ENCODE measurements at regions of chr7 and their contacts with region 1.

Region 1: GRCh38 chr7:131071786-131072504 is 255.7 kb upstream of the MKLN1 start:
- DNase-seq: no peak
- ATAC-seq: no peak
- H3K4me3 Mint-ChIP-seq: no peak overlapping the region
- H3K27ac Mint-ChIP-seq: peak overlapping the region; percentile 73
- H3K4me1 Mint-ChIP-seq: peaks cover 82% of the 10 kb centered on the region
- H3K27me3 Mint-ChIP-seq: no peaks in the 10 kb centered on the region
- CTCF ChIP-seq: no peak

Region 2: GRCh38 chr7:129703751-129704150 is 1368.2 kb before region 1 on chr7:
- CTCF ChIA-PET with region 1: no interaction called
- POLR2A ChIA-PET with region 1: interaction called, 12 read pairs
- intact Hi-C with region 1: no loop called
- DNase-seq: no peak
- ATAC-seq: no peak
- H3K4me3 Mint-ChIP-seq: no peak overlapping the region
- H3K27ac Mint-ChIP-seq: no peak overlapping the region
- H3K4me1 Mint-ChIP-seq: no peaks in the 10 kb centered on the region
- H3K27me3 Mint-ChIP-seq: no peaks in the 10 kb centered on the region
- CTCF ChIP-seq: no peak

Region 3: DNA sequence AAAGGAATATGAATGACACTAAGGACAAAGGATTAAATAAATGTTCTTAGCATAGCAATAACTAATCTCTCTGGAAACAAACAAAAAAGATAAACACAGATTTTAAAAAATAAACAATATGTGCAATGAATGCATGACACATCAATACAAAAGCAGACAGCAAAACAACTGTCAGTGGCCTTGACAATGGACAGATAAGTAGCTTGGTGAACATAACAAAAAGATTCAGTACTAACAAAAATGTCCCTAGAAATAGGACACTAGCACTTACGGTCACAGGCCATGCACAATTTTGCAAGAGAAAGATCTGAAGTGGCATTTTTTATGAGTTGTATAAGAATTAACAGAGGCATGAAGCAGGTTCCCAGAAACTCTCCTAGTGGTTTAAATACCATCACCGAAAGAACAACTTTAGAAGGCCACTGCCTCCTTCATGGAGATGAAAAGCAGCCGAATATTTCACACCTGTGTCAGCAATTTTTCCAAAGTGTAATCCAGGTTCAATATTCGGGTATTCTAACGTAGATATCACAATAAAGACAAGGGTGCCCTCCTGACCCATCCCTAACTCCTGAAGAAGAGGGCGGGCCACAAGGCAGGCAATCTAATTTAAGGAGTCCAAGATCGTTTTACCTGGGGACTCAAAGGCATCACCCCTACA is 24.5 kb after region 1 on chr7:
- CTCF ChIA-PET with region 1: no interaction called
- POLR2A ChIA-PET with region 1: no interaction called
- intact Hi-C with region 1: no loop called
- DNase-seq: no peak
- ATAC-seq: no peak
- H3K4me3 Mint-ChIP-seq: no peak overlapping the region
- H3K27ac Mint-ChIP-seq: no peak overlapping the region
- H3K4me1 Mint-ChIP-seq: peaks cover 84% of the 10 kb centered on the region
- H3K27me3 Mint-ChIP-seq: no peaks in the 10 kb centered on the region
- CTCF ChIP-seq: no peak

Region 4: GRCh38 chr7:131139462-131139861 is 67.5 kb after region 1 on chr7:
- CTCF ChIA-PET with region 1: no interaction called
- POLR2A ChIA-PET with region 1: no interaction called
- intact Hi-C with region 1: no loop called
- DNase-seq: no peak
- ATAC-seq: no peak
- H3K4me3 Mint-ChIP-seq: no peak overlapping the region
- H3K27ac Mint-ChIP-seq: no peak overlapping the region
- H3K4me1 Mint-ChIP-seq: no peaks in the 10 kb centered on the region
- H3K27me3 Mint-ChIP-seq: no peaks in the 10 kb centered on the region
- CTCF ChIP-seq: no peak

Region 5: GRCh38 chr7:131231381-131232220 is 159.7 kb after region 1 on chr7:
- CTCF ChIA-PET with region 1: no interaction called
- POLR2A ChIA-PET with region 1: no interaction called
- intact Hi-C with region 1: loop called (anchors 5 kb)
- DNase-seq: peak; percentile 31
- ATAC-seq: peak; percentile 73
- H3K4me3 Mint-ChIP-seq: peak overlapping the region; percentile 82
- H3K27ac Mint-ChIP-seq: peak overlapping the region; percentile 97
- H3K4me1 Mint-ChIP-seq: peaks cover 29% of the 10 kb centered on the region
- H3K27me3 Mint-ChIP-seq: no peaks in the 10 kb centered on the region
- CTCF ChIP-seq: no peak

Region 6: GRCh38 chr7:131424219-131424822 is 352.4 kb after region 1 on chr7:
- CTCF ChIA-PET with region 1: interaction called, 23 read pairs
- POLR2A ChIA-PET with region 1: interaction called, 7 read pairs
- intact Hi-C with region 1: loop called (anchors 1 kb)
- DNase-seq: no peak
- ATAC-seq: peak; percentile 81
- H3K4me3 Mint-ChIP-seq: no peak overlapping the region
- H3K27ac Mint-ChIP-seq: no peak overlapping the region
- H3K4me1 Mint-ChIP-seq: peaks cover 2% of the 10 kb centered on the region
- H3K27me3 Mint-ChIP-seq: no peaks in the 10 kb centered on the region
- CTCF ChIP-seq: no peak

Region 7: DNA sequence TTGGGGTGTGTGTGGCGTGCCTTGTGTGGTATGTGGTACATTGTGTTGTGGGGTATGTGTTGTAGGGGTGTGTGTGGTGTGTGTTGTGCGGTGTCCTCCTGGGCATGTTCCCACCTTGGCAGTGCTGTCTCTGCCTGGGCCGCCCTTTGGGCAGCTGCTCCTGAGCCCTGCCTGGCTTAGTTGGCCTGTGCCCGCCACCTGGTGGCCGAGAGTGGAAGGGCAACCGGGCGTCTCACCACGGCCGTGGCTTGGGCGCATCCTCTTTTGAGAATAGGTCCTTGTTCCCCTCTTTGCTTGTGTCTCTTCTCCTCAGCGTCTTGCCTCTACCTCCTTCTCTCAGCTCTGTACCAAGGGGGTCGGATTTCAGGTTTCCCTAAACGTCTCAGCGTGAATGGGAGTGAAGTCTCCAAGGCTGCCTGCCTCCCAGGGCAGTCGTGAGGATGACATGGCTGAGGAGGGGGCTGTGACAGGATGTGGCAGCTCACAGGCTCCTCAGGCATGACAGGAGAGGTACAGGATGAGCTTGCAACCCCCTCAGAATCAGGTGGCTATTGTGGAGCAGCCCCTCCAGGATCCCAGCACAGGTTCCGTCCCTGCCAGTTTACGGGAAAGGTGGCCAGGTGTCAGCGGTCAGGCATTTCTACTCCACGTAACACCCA is 582.9 kb after region 1 on chr7:
- CTCF ChIA-PET with region 1: no interaction called
- POLR2A ChIA-PET with region 1: no interaction called
- intact Hi-C with region 1: loop called (anchors 10 kb)
- DNase-seq: peak; percentile 81
- ATAC-seq: peak; percentile 89
- H3K4me3 Mint-ChIP-seq: no peak overlapping the region
- H3K27ac Mint-ChIP-seq: no peak overlapping the region
- H3K4me1 Mint-ChIP-seq: no peaks in the 10 kb centered on the region
- H3K27me3 Mint-ChIP-seq: no peaks in the 10 kb centered on the region
- CTCF ChIP-seq: peak; percentile 74

Measured in activated B cell treated with CpG ODN at 0.5 μM for 24 hours (primary cell).